Prostate gland (tissue), 2 donors: ENCODE measurements at regions of chr1 and their contacts with region 1.

Region 1: DNA sequence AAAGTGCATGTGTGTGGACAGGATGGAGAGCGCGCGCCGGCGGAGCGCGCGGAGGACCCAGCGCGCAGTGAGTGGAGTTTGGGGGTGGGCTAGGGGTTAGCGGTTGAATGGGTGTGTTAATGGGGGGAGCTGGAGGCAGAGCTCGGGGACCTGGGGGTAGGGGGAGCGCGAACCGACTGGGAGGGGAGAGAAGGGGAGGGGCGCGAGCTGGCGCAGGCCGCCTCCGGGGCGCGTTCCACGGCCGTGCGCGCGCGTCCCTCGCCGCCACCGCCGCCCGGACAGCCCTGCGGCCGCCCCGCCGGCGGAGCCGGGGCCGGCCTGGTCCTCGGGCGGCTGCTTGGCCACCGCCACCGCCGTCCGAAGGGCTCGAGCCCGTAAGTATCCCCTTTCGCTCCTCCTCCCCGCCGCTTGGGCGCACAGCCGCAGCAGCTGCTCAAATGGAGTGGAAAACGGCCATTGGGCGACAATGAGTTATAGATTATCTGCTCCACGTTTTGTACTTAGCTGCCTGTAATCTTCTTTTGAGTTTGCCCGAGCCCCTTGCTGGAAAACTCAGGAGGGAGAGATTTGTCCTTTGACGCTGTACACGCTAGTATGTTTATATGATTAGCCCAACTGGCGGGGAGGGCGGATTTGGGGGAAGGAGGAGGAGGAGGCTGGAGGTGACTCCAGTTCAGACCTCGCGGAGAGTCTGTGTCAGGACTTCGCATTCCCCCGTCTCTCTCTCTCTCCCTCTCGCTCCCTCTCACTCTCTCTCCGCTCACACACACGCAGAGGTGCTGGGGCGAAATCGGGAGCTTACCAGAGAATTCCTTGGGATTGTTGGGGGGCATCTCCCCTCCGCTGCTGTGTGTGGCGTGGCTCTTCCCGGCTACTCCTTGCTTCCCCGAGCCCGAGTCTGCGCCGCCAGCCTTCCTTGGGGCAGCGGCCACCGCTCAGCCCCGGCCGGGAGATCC is at the start of gene ADGRL2:
- DNase-seq: peak; percentile 91
- H3K4me3 ChIP-seq: peak within 1 kb of the TSS; percentile 64 to 68
- H3K27ac ChIP-seq: peak within 1 kb of the TSS; percentile 94 to 98
- H3K4me1 ChIP-seq: no peaks in the 10 kb centered on the region
- H3K27me3 ChIP-seq: no peaks in the 10 kb centered on the region
- CTCF ChIP-seq: peak in 1 of 4 experiments; percentile 3
- POLR2A ChIP-seq: peak; percentile 58
- total RNA-seq, gene ADGRL2: 34.0 to 54.0 TPM

Region 2: DNA sequence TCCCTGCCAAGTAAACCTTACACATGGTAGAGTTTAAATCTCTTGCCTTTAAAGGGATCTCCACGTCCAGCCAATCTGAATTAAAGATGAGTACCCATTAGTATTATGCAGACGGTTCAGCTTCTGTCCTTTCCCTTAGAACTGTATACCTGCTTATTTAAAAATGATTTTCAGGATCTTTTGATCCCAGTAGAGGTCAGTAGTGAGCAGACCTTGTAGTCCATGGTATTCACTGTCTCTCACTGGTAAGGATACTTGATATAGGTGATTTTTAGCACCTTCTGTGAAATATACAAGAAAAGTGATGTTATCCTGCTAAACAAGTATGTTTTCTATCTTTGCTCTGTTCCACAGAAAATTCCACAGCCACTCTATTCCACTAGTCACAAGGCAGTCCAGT is 1582.9 kb before region 1 on chr1:
- intact Hi-C with region 1: loop called (anchors 5 kb)
- DNase-seq: no peak
- H3K4me3 ChIP-seq: no peak overlapping the region
- H3K27ac ChIP-seq: no peak overlapping the region
- H3K4me1 ChIP-seq: no peaks in the 10 kb centered on the region
- H3K27me3 ChIP-seq: no peaks in the 10 kb centered on the region
- CTCF ChIP-seq: peak in 2 of 4 experiments; percentile 28 to 29
- POLR2A ChIP-seq: no peak

Region 3: DNA sequence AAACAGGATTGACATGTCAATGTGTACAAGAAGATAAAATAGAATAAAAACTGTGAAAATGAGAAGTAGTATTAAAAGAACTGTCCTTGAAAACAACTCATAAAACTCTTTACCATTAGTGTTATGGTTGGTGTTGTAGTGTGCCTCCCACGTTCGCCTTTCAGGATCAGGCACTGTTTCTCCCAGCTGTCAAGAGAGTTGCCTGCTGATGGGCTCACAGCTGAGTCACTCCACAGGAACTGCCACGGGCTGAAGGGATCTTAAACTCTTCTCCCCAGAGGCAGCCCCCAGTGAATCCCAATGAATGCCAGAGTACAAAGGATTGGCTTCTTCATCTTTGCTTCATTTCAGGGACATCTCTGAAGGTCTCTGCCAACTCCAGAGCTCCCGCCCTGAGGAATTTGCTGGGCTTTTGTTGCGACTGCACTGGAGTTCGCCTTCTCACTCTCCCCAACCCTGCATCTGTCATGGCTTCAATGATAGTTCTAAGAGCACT is 119.3 kb after region 1 on chr1:
- intact Hi-C with region 1: loop called (anchors 5 kb)
- DNase-seq: no peak
- H3K4me3 ChIP-seq: no peak overlapping the region
- H3K27ac ChIP-seq: no peak overlapping the region
- H3K4me1 ChIP-seq: no peaks in the 10 kb centered on the region
- H3K27me3 ChIP-seq: no peaks in the 10 kb centered on the region
- CTCF ChIP-seq: no peak
- POLR2A ChIP-seq: no peak